B cell (primary cell): ENCODE measurements at regions of chr6 and their contacts with region 1.

Region 1: DNA sequence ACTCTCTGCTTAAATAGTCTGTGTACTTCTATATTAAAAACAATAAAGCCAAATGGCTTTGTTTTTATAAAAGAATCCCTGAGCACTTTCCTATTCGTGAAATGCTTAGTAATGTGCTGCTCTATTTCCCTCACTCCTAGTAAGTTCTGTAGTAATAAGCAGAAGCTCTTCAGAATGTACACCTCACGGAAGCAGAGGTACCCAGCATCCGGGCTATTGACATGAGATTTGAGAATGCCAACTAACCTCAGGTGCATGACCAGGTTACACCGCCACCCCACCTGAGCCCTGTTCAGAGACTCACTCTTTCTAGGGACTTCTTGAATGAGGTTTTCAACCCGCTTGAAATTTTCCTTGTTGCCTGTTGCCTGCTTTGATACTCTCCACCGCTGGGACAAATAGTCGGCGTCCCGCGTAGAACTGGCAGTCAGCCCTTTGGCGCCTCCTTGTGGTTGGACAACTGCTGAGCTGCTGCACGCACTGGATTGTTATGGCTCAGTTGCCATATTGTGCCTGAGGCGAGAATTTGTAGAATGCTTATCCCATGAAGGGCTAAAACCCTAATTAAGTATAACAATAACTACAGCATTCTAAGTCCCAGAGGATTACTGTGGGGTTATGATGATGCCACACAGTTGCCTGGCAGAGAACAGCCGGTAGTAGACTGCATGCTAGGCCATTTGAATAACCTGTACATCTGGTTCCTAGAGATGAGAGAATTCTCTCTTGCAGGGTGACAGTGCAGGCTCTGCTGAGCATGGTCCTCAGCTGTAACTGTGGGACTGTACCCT is 95.4 kb downstream of the KHDC1L start:
- DNase-seq: peak; percentile 82
- ATAC-seq: peak; percentile 93
- H3K4me3 ChIP-seq: peak overlapping the region in 3 of 5 experiments; percentile 3 to 36 (median 25)
- H3K4me3 Mint-ChIP-seq: peak overlapping the region; percentile 61
- H3K27ac ChIP-seq: no peak overlapping the region
- H3K27ac Mint-ChIP-seq: no peak overlapping the region
- H3K4me1 ChIP-seq: peaks cover 3 to 6% of the 10 kb centered on the region in 2 donors
- H3K4me1 Mint-ChIP-seq: peaks cover 7% of the 10 kb centered on the region
- H3K27me3 ChIP-seq: no peaks in the 10 kb centered on the region
- H3K27me3 Mint-ChIP-seq: no peaks in the 10 kb centered on the region
- CTCF ChIP-seq: peak; percentile 100

Region 2: GRCh38 chr6:73145690-73146089 is 15.8 kb after region 1 on chr6:
- CTCF ChIA-PET with region 1: interaction called, 12 read pairs
- POLR2A ChIA-PET with region 1: no interaction called
- intact Hi-C with region 1: no loop called
- DNase-seq: no peak
- ATAC-seq: no peak
- H3K4me3 ChIP-seq: no peak overlapping the region
- H3K4me3 Mint-ChIP-seq: no peak overlapping the region
- H3K27ac ChIP-seq: no peak overlapping the region
- H3K27ac Mint-ChIP-seq: no peak overlapping the region
- H3K4me1 ChIP-seq: no peaks in the 10 kb centered on the region
- H3K4me1 Mint-ChIP-seq: peaks cover 8% of the 10 kb centered on the region
- H3K27me3 ChIP-seq: no peaks in the 10 kb centered on the region
- H3K27me3 Mint-ChIP-seq: no peaks in the 10 kb centered on the region
- CTCF ChIP-seq: no peak

Region 3: DNA sequence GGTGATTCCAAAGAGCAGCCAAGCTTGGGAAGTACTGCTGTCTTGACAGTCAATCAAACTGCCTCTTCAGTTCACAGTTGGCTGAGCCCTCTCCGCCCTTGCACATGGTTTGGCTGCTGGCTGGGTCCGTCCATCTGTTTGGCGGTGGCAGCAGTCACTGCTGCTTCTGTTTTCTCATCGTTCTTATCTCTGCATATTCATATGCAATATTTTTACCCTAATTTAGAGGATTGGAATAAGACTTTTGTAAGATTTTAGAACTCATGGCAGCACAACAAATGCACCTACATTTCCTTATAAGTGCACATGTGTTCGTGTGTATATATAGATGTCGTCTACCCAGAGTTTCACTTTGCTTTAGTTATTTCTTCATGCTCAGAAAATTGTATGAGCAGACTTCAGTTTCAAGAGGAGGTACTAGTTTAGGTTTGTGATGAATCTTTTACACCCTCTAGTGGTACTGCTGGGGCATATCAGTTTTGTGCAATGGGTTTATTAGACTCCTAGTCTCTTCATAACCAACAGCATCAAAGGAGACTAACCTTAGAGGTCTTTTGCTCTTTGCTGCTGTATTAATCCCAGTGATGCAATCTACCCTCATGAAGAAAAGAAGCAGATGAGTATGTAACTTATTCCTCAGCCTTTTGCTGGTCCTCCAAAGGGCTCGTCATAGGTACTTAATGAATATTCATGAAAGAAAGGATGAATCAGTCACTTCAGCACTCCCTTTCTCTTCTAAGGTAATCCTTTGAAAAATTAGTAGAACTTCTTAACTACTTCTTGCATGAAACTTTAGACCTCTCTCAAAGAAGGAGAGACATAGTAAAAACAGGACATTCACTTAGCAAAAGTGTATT is 51.1 kb after region 1 on chr6:
- CTCF ChIA-PET with region 1: interaction called, 10 read pairs
- POLR2A ChIA-PET with region 1: no interaction called
- intact Hi-C with region 1: loop called (anchors 1 kb)
- DNase-seq: peak; percentile 76
- ATAC-seq: peak; percentile 90
- H3K4me3 ChIP-seq: peak overlapping the region in 4 of 5 experiments; percentile 11 to 54 (median 46)
- H3K4me3 Mint-ChIP-seq: peak overlapping the region; percentile 88
- H3K27ac ChIP-seq: no peak overlapping the region
- H3K27ac Mint-ChIP-seq: peak overlapping the region; percentile 43
- H3K4me1 ChIP-seq: peaks cover 23 to 25% of the 10 kb centered on the region in 2 donors
- H3K4me1 Mint-ChIP-seq: peaks cover 12% of the 10 kb centered on the region
- H3K27me3 ChIP-seq: no peaks in the 10 kb centered on the region
- H3K27me3 Mint-ChIP-seq: no peaks in the 10 kb centered on the region
- CTCF ChIP-seq: peak; percentile 95

Region 4: GRCh38 chr6:73329201-73329600 is 199.4 kb after region 1 on chr6:
- CTCF ChIA-PET with region 1: interaction called, 13 read pairs
- POLR2A ChIA-PET with region 1: no interaction called
- intact Hi-C with region 1: loop called (anchors 5 kb)
- DNase-seq: no peak
- ATAC-seq: no peak
- H3K4me3 ChIP-seq: no peak overlapping the region
- H3K4me3 Mint-ChIP-seq: no peak overlapping the region
- H3K27ac ChIP-seq: no peak overlapping the region
- H3K27ac Mint-ChIP-seq: no peak overlapping the region
- H3K4me1 ChIP-seq: no peaks in the 10 kb centered on the region
- H3K4me1 Mint-ChIP-seq: no peaks in the 10 kb centered on the region
- H3K27me3 ChIP-seq: peaks cover 0 to 6% (median 0%) of the 10 kb centered on the region in 4 experiments
- H3K27me3 Mint-ChIP-seq: peaks cover 39% of the 10 kb centered on the region
- CTCF ChIP-seq: no peak